ENCODE measurements at regions of chr14 and their contacts with region 1.

Region 1: DNA sequence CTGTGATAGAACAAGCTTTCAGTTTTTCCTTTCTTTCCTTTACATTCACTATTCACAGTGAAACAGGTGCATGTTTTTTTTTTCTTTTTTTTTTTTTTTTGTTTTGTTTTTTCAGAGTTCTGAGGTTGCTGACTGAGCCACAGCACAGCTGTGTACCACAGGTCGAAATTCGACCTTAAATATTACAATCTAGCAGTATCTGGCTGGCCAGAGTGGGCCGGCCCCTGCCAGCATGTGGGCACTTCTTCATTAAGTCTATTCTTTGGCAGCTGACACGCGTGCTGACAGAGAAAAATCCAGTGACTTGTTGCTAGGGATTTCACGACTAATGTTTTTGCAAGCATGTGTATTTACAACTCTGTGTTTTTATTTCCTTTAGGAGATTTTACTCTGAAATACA is 33.9 kb downstream of the FBXO33 start:
- DNase-seq: no peak

Region 2: DNA sequence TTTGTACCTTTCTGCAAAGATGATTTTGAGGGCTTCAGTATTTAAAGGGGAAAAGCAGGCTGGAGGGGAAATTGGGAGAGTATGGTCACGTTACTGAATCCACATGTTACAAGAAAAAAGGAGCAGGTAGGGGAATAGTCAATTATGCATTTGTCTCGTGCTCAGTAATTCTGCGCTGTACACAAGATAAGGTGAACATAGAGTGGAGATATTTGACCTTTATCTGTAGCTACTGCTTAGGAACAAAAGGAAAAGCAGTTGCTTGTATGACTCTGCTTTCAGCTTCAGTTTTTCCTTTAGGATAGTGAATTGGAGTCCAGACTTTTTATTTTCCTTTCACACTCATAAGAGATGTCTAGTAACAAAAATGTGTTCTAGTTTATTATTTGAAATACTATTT is 15.9 kb before region 1 on chr14:
- CTCF ChIA-PET with region 1: interaction called, 14 read pairs
- POLR2A ChIA-PET with region 1: no interaction called
- DNase-seq: no peak

Region 3: DNA sequence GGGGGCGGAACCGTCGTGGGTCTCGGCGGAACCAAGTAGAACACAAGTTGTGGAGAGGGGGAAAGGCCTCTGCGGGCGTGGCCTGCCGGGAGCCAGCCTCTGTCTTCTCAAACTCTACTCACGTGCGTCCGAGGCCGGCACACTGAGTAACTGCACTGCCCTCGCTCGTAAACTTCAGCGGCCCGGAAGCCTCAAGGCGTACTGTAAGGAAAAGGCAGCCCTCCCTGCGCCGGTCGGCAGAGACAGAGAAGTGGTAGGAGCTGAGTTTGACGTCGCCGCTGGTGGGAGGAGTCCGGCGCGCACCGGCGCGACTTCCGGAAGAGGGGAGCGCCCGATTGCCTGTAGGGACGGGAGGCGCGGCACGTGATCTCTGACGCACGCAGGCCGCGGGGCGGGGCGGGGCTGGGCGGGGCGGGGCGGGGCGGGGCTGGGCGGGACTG is 33.8 kb after region 1 on chr14 and contains the start of gene FBXO33:
- CTCF ChIA-PET with region 1: no interaction called
- POLR2A ChIA-PET with region 1: no interaction called
- DNase-seq: peak; percentile 90

Measured in HEK293T (cell line).